ENCODE measurements at regions of chr2 and their contacts with region 1.

Region 1: GRCh38 chr2:138373993-138374408 is 127.6 kb upstream of the SPOPL start:
- DNase-seq: peak in 1 of 3 donors; percentile 31
- ATAC-seq: peak; percentile 48
- H3K4me3 ChIP-seq: no peak overlapping the region
- H3K4me1 ChIP-seq: no peaks in the 10 kb centered on the region
- CTCF ChIP-seq: no peak

Region 2: GRCh38 chr2:138180692-138181386 is 193.2 kb before region 1 on chr2:
- intact Hi-C with region 1: loop called in 1 of 2 experiments (anchors 5 kb)
- DNase-seq: no peak
- ATAC-seq: no peak
- H3K4me3 ChIP-seq: no peak overlapping the region
- H3K4me1 ChIP-seq: no peaks in the 10 kb centered on the region
- CTCF ChIP-seq: no peak